A549 (cell line): ENCODE measurements at regions of chr11 and their contacts with region 1.

Region 1: GRCh38 chr11:44775366-44775984 is 48.7 kb downstream of the TSPAN18 start:
- DNase-seq: peak; percentile 78 to 80
- ATAC-seq: peak; percentile 90 to 99
- H3K4me3 ChIP-seq: no peak overlapping the region
- H3K27ac ChIP-seq: no peak overlapping the region
- H3K4me1 ChIP-seq: no peaks in the 10 kb centered on the region
- CTCF ChIP-seq: peak; percentile 70
- EP300 ChIP-seq: no peak
- POLR2A ChIP-seq: no peak
- RAD21 ChIP-seq: peak; percentile 56 to 57

Region 2: DNA sequence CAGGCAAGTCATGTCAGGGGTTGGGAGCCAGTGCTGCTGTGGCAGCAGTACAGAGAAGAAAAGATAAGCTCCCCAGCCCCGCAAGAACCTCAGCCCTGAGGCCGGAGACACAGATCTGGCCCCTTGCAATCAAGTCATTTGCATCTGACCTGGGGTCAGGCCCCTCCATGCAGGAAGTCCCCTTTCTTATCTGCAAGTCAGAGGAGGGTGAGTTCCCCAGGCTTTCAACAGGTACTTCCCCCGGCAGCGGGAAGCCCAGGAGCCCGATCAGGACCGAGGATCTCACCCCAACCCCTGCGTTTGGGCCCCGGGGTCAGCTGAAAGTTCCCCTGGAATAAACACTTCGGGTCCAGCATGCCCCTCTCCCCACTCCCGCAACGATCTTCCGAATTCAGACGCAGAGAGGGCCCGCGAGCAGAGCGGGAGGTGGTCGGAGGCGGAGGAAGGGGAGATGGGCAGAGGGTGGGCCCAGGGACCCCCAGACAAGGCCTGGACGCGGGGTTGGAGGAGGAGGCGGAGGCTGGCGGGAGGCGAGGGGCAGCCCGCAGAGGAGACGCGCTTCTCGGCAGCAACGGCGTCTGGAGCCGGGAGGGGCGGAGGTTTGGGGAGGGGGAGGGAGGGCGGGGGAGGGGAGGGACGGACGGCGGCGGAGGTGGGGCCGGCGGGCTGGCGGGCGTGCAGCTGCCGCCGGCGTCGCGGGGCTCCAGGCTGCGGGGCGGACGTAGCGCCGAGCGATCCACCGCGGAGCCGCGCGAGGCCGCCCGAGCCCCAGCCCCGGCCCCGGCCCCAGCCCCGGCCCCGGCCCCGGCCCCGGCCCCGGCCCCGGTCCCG is 49.0 kb before region 1 on chr11 and contains the start of gene TSPAN18:
- CTCF ChIA-PET with region 1: interaction called, 19 read pairs
- POLR2A ChIA-PET with region 1: no interaction called
- DNase-seq: no peak
- ATAC-seq: peak in 1 of 2 experiments; percentile 51; a peak in 2 of 6 replicates
- H3K4me3 ChIP-seq: peak within 1 kb of the TSS; percentile 56
- H3K27ac ChIP-seq: peak within 1 kb of the TSS; percentile 59 to 86
- H3K4me1 ChIP-seq: peaks cover 7% of the 10 kb centered on the region; the same call in 1 of the 3 replicates
- CTCF ChIP-seq: no peak
- EP300 ChIP-seq: no peak
- POLR2A ChIP-seq: no peak
- RAD21 ChIP-seq: no peak
- polyA plus RNA-seq, gene TSPAN18: 0.81 and 0.98 TPM in 2 replicates

Region 3: GRCh38 chr11:44747316-44747715 is 28.2 kb before region 1 on chr11:
- CTCF ChIA-PET with region 1: interaction called, 16 read pairs
- POLR2A ChIA-PET with region 1: no interaction called
- DNase-seq: no peak
- ATAC-seq: no peak
- H3K4me3 ChIP-seq: no peak overlapping the region
- H3K27ac ChIP-seq: no peak overlapping the region
- H3K4me1 ChIP-seq: no peaks in the 10 kb centered on the region
- CTCF ChIP-seq: no peak
- EP300 ChIP-seq: no peak
- POLR2A ChIP-seq: no peak
- RAD21 ChIP-seq: no peak

Region 4: DNA sequence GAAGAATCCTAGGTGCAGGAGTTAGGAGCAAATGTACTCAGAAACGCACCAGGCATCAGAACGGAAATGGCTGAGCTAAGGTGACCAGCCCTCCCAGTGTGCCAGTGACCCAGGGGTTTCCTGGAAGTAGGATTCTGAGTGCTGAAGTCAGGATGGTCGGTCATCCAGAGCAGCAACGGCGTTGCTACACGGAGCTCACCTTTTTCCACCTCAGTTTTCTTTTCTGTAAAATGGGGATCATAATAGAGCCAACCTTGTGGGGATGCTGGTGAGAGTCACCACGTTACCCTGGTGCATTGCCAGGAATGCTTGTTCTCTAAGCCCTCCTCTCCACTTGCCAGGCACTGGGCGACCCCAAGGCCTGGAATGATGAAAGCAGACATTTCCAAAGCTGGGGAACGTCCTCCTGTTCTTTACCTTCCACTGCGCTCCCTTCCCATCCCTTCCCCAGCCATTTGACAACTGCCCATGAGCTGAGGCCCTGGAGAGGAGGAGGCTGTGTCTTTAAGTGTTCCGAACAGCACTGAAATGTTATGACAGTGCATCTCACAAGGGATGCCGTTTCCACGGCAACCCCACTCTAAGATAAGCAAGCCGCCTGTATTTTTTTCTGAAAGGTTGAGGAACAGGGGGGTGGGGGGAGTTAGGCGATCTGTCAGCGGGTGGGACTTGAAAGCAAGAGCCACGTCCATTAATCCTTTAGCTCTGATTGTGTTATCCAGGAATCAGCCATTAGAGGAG is 18.0 kb after region 1 on chr11:
- CTCF ChIA-PET with region 1: interaction called, 39 read pairs
- POLR2A ChIA-PET with region 1: no interaction called
- DNase-seq: peak in 1 of 2 experiments; percentile 18
- ATAC-seq: peak in 1 of 2 experiments; percentile 33; a peak in 1 of 6 replicates
- H3K4me3 ChIP-seq: no peak overlapping the region
- H3K27ac ChIP-seq: no peak overlapping the region
- H3K4me1 ChIP-seq: no peaks in the 10 kb centered on the region
- CTCF ChIP-seq: no peak
- EP300 ChIP-seq: no peak
- POLR2A ChIP-seq: no peak
- RAD21 ChIP-seq: no peak

Region 5: DNA sequence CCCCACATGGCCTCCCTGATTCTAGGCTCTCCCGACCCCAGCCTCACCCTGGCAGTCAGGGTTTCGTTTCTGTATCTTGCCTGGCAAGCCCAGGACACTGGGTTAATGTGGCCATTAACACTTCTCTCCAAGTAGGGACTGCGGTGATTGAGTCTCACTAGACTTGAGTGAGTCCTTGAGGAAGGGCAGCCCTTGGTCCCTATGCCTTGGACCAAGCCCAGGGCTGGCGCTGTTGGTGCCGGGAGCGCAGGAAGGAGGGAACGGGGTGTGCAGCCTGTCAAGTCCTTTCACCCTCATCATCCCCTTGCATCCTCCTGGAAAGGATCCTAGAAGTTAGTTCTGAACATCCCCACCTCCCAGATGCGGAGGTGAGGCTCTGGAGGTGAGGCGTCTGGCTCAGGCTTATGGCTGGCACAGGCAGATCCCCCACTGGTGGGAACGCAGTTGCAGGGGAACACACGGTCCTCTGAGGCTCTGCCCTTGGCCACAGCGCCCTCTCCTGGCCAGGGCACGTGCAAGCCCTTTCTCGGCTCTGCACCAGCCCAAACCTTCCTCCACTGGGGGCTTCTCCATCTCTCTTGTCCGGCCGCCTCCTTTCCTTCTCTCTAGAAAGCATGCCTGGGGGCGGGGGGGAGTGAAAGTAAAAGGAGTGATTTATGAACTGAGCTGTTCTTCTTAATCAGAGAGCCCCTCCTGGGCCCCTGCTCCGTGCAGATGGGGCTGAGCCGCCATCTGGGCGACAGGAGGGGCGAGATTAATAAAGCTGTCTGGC is 118.6 kb after region 1 on chr11:
- CTCF ChIA-PET with region 1: interaction called, 16 read pairs
- POLR2A ChIA-PET with region 1: no interaction called
- DNase-seq: peak; percentile 66 to 78
- ATAC-seq: peak; percentile 88 to 98
- H3K4me3 ChIP-seq: no peak overlapping the region
- H3K27ac ChIP-seq: no peak overlapping the region
- H3K4me1 ChIP-seq: no peaks in the 10 kb centered on the region
- CTCF ChIP-seq: peak; percentile 87
- EP300 ChIP-seq: no peak
- POLR2A ChIP-seq: no peak
- RAD21 ChIP-seq: peak; percentile 92 to 94